ENCODE measurements at regions of chr1 and their contacts with region 1.

Region 1: GRCh38 chr1:112762541-112763517 is 47.7 kb upstream of the PPM1J start:
- DNase-seq: no peak
- H3K4me3 ChIP-seq: no peak overlapping the region
- H3K27ac ChIP-seq: no peak overlapping the region
- H3K27me3 ChIP-seq: no peaks in the 10 kb centered on the region
- CTCF ChIP-seq: no peak

Region 2: DNA sequence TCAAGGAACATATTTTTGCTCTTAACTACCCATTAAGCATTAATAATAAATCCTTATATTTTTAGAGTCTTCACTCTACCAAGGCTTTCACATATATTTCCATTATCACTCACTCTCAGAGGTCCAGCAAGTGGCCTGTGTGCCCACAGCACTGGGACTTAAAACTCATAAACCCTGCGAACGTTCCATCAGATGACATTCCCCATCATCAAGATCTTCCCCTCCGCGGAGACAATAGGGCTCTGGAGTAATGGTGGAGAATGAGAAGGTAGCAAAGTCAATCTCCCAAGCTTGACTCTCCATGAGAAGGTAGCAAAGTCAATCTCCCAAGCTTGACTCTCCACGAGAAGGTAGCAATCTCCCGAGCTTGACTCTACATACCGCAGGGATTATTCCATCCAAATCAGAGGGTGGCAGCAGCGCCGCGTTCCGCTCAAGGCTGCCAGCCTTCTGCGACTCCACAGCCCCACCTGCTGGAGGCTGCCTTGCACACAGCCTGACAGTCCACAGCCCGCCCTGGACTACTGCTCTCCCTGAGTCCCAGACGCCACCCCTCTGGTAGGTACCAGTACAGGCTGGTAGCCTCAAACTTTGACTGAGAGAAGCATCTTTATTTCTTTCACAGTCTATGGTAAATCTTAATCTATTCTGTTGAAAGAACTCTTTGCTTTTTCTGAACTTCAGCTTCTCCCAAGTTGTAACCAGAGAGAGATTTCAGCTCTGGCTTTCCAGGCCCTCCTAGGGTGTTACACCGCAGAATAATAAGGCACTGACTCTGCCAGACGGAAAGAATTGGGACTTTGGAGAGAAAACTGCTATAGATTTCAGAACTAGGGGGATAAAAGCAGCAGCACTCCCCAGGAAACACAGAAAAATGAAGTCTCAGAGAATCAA is 393.2 kb before region 1 on chr1:
- CTCF ChIA-PET with region 1: no interaction called
- POLR2A ChIA-PET with region 1: no interaction called
- DNase-seq: peak; percentile 44
- H3K4me3 ChIP-seq: no peak overlapping the region
- H3K27ac ChIP-seq: no peak overlapping the region
- H3K27me3 ChIP-seq: peaks cover 24% of the 10 kb centered on the region
- CTCF ChIP-seq: peak; percentile 99

Region 3: DNA sequence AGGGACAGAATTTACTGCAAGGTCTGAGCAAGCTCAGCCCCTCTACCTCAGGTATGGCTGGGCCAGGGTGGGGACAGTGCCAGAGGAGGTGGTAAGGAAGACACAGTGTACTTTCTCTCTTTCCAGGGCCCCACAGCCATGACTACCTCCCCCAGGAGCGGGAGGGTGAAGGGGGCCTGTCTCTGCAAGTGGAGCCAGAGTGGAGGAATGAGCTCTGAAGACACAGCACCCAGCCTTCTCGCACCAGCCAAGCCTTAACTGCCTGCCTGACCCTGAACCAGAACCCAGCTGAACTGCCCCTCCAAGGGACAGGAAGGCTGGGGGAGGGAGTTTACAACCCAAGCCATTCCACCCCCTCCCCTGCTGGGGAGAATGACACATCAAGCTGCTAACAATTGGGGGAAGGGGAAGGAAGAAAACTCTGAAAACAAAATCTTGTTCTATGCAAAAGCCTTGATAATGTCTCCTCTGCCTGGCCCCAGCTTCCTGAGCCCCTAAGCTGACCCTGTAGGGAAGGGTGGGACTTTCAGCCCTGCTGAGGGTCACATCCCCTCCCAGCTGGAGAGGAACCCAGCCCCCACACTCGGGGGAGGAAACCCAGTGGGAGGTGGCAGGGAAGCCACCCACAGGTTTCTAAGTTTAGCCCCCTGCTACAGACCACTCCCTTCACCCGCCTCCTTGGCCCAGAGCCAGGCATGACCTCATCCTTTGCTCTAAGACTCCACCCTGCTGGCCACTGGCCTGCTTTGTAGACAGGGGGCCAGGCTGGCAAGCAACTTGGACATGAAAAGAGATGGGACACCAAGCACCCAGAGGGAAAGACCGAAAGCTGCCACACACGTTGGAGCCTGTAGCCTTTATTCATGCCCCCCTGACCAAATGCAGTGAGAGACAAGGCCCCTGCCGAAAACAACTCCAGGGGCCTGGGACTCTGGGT is 62.3 kb before region 1 on chr1:
- CTCF ChIA-PET with region 1: no interaction called
- POLR2A ChIA-PET with region 1: no interaction called
- DNase-seq: peak; percentile 89
- H3K4me3 ChIP-seq: peak overlapping the region; percentile 17; the same call in 1 of the 2 replicates
- H3K27ac ChIP-seq: peak overlapping the region; percentile 92
- H3K27me3 ChIP-seq: no peaks in the 10 kb centered on the region
- CTCF ChIP-seq: no peak; the same call in 1 of the 2 replicates

Region 4: DNA sequence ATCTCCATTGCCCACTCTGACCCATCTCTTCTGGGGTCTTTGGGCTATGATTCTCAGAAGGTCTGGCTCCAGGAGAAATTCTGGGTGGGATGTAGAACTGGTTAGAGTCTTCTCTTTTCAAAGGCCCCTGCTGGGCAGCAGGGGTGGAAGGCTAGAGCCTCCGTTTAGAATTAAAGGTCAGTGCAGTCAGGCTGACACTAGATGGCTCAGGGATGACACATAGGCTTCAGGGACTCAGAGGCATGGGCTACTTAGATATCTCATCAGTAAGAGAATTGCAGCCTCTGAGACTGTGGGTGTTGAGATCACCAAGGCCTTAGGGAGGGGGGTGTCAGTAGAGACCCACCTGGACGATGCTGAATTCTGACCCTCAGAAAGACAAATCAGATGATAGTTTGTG is 35.1 kb before region 1 on chr1:
- CTCF ChIA-PET with region 1: no interaction called
- POLR2A ChIA-PET with region 1: no interaction called
- DNase-seq: no peak
- H3K4me3 ChIP-seq: no peak overlapping the region
- H3K27ac ChIP-seq: no peak overlapping the region
- H3K27me3 ChIP-seq: no peaks in the 10 kb centered on the region
- CTCF ChIP-seq: no peak

Region 5: GRCh38 chr1:112849425-112850033 is 86.7 kb after region 1 on chr1:
- CTCF ChIA-PET with region 1: no interaction called
- POLR2A ChIA-PET with region 1: no interaction called
- DNase-seq: no peak
- H3K4me3 ChIP-seq: peak overlapping the region; percentile 57
- H3K27ac ChIP-seq: no peak overlapping the region
- H3K27me3 ChIP-seq: no peaks in the 10 kb centered on the region
- CTCF ChIP-seq: no peak

Region 6: GRCh38 chr1:113783254-113784099 is 1020.6 kb after region 1 on chr1:
- CTCF ChIA-PET with region 1: no interaction called
- POLR2A ChIA-PET with region 1: interaction called, 10 read pairs
- DNase-seq: no peak
- H3K4me3 ChIP-seq: no peak overlapping the region
- H3K27ac ChIP-seq: no peak overlapping the region
- H3K27me3 ChIP-seq: no peaks in the 10 kb centered on the region
- CTCF ChIP-seq: no peak

Measured in AG04450 (cell line).